ENCODE measurements at regions of chr11 and their contacts with region 1.

Region 1: DNA sequence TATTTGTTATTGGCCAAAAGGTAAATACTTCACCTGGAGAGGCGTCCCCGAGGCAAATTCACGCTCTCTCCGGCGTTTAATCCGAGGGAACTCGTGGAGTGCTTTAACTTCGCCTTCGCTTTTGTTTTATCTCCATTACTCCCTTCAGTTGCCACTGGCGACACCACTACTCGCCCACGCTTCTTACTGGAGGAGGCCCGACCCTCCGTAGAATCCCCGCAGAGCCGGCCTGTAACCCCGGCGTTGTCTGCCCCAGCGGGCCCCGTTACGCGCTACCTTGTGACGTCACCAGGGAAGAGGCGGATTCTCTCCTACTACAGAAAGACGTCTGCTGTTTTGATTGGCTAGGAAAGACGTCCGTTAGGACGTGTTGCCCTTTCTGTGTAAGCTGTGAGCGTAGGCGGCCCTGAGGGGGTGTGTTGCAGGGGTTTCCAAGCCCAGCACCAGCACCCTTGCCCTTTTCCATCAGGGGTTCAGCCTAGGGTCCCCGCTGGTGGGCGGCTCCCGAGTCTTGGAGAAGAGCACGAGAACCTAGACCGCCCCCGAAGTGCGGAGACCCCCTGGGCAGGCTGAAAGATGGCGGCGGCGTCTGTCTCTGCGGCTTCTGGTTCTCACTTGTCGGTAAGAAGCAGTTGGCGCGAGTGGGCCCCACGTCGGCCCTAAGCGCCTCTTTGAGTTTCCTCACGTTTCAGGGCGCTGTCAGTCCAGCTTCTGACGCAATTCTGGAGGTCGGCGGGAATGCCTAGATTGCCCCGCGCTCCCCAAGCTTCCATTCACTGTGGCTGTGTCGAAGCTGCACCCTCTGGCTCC is at the start of gene CEP57:
- DNase-seq: peak; percentile 99
- ATAC-seq: peak; percentile 76
- H3K4me3 ChIP-seq: peak within 1 kb of the TSS; percentile 78
- H3K27ac ChIP-seq: peak within 1 kb of the TSS; percentile 85
- H3K4me1 ChIP-seq: no peaks in the 10 kb centered on the region
- H3K27me3 ChIP-seq: no peaks in the 10 kb centered on the region
- CTCF ChIP-seq: no peak
- POLR2A ChIP-seq: peak; percentile 58
- RAD21 ChIP-seq: no peak
- total RNA-seq, gene CEP57: 30.5 and 38.0 TPM in 2 replicates

Region 2: DNA sequence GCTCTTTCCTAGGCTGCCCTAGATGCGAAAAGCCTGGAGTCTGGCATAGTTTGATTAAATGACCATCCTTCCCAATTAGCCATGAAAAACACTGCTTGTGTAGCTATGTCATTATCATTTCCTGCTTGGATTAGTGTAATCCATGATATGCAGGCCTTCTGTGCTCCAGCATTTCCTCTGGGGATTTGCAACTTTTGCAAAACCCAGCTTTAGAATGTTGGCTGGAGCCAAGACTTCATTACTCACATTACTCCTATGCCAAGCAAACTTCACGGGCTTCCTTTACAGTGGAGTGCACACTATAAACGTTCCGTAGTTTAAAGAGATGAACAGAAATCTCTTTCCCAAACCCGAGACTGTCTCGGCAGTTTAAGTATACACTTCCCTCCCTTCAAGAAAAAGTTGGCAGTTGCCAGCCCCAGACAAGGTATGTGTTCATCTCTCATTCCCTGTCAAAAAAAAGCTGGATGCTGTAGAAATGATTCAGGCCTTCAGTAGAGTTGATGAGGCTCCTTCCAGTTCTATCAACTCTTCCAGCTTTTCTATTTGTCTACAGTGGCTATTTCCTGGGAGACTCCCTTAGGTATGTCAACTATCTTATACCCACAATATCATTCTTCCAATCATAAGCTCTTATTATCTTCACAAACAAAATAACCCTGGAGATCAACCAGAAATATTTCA is 372.6 kb after region 1 on chr11:
- CTCF ChIA-PET with region 1: no interaction called
- POLR2A ChIA-PET with region 1: no interaction called
- dilution Hi-C with region 1: no loop called
- in situ Hi-C with region 1: no loop called
- intact Hi-C with region 1: loop called (anchors 5 kb)
- DNase-seq: peak; percentile 95
- ATAC-seq: peak; percentile 77
- H3K4me3 ChIP-seq: no peak overlapping the region
- H3K27ac ChIP-seq: peak overlapping the region; percentile 92
- H3K4me1 ChIP-seq: peaks cover 27% of the 10 kb centered on the region
- H3K27me3 ChIP-seq: no peaks in the 10 kb centered on the region
- CTCF ChIP-seq: no peak
- POLR2A ChIP-seq: no peak
- RAD21 ChIP-seq: no peak

Region 3: DNA sequence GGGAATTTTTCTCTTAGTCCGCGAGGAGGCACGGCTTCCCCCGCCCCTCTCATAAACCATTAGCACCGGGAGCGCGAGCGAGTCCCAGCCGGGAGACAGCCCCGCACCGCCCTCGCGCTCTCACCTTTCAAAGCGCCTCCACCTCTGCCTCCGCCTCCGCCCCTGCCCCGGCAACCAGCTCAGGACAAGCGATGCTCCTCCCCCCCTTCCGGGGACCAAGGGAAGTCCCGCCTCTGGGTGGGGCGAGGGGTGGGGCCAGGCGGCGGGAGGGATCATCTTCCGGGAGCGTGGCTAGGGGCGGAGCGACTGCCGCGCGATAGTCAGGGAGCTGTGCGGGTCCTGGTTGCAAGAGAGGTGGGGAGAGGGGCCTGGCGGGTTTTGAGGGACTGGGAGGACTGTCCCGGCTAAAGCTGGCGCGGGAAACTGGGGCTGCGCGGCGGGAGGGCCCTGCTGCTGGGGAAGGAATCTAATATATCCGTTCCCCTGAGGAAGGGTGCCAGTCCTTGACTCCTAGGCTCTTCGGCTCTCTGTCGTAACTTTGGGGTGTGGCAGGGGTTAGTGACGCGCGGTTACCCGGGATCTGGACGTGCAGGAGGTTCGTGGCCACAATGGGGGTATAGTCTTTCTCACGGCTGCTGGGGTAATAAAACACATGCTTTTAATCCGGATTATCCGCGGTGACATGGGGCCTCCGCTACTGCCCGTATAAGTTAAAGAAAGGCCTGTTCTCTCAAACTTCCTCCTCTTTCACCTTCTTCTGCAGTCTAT is 599.6 kb after region 1 on chr11 and contains the starts of genes CCDC82 and JRKL:
- CTCF ChIA-PET with region 1: no interaction called
- POLR2A ChIA-PET with region 1: no interaction called
- dilution Hi-C with region 1: no loop called
- in situ Hi-C with region 1: no loop called
- intact Hi-C with region 1: loop called (anchors 1 kb)
- DNase-seq: peak; percentile 92
- ATAC-seq: peak; percentile 99
- H3K4me3 ChIP-seq: peak within 1 kb of the TSS; percentile 92
- H3K27ac ChIP-seq: peak within 1 kb of the TSS; percentile 91
- H3K4me1 ChIP-seq: no peaks in the 10 kb centered on the region; the same call in 1 of the 2 replicates
- H3K27me3 ChIP-seq: no peaks in the 10 kb centered on the region
- CTCF ChIP-seq: no peak
- POLR2A ChIP-seq: peak; percentile 83
- RAD21 ChIP-seq: no peak
- total RNA-seq, gene CCDC82: 4.1 and 11.7 TPM in 2 replicates
- total RNA-seq, gene JRKL: 5.9 and 10.3 TPM in 2 replicates

Measured in IMR-90 (cell line).